Activated CD4-positive, alpha-beta memory T cell treated with anti-CD3 and anti-CD28 coated beads, Interleukin-2, amount 10 ng/mL, durations not matched to agents 7 days and 5 days (primary cell): ENCODE measurements at regions of chrX and their contacts with region 1.

Region 1: GRCh38 chrX:39859991-39860861 is 237.5 kb downstream of the BCOR start:
- DNase-seq: peak; percentile 89
- H3K4me3 Mint-ChIP-seq: peak overlapping the region; percentile 35
- H3K27ac Mint-ChIP-seq: peak overlapping the region; percentile 91
- H3K4me1 Mint-ChIP-seq: peaks cover 60% of the 10 kb centered on the region
- H3K27me3 Mint-ChIP-seq: no peaks in the 10 kb centered on the region

Region 2: DNA sequence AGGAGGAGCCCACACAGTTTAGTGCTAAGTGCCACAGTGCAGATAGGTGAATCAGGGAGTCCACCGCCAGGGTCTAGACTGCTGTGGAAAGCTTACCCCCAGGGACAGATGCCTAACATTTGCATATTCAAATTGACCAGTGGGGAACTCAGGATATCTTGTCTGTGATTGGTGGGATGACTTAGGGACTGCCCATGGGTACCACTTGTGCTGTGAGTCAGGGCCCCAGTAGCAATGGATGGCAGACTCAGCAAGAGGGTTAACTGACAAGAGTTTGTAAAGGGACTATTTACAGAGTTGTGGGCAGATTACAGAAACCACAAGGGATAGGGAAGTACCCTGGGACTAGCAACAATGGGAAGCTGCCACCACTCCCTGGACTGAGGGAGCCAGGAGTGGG is 44.6 kb before region 1 on chrX:
- CTCF ChIA-PET with region 1: interaction called, 14 read pairs
- POLR2A ChIA-PET with region 1: interaction called, 30 read pairs
- DNase-seq: no peak
- H3K4me3 Mint-ChIP-seq: no peak overlapping the region
- H3K27ac Mint-ChIP-seq: no peak overlapping the region
- H3K4me1 Mint-ChIP-seq: peaks cover 30% of the 10 kb centered on the region
- H3K27me3 Mint-ChIP-seq: peaks cover 10% of the 10 kb centered on the region

Region 3: DNA sequence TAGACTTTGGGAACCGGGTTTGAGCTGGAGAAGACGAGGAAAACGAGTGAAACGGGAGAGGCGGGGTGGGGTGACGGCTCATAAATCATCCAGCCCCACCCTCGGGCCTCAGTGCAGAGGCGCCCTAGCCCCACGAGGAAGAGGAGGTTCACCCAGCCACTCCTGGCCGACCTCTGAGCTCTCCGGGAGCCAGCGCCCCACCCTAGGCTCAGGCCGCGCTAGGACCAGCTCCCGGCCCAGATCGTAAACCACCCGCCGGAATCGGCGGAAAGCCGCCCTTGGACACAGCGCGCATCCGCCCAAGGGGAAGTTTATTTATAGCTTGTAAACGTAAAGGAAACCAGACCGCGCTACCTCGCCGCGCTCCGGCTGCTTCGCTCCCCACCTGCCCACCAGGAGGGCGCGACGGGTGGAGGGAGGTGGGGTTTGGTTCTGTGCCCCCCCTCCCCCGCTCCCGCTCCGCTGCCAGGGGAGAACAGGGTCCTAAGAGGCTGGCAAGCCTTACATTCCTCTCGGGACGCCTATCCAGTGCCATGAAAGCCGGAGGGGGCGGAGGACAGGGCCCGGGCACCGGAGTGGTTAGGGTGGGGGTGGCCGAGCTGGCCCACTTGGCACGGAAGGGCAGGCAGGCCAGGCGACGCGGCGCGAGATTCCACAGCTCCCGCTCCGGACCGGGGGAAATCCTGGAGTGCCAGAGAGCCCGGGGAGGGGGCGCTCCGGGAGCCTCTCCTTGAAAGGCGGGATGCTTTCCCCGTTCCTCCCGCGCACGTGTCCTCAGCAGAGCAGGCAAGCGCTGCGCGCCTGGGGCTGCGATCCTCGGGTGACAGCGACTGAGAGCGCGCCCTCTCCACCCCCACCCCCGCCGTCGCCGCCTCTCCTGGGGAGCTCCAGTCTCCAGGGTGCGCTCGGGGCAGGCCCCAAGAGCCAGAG is 153.3 kb after region 1 on chrX:
- CTCF ChIA-PET with region 1: interaction called, 3 read pairs
- POLR2A ChIA-PET with region 1: interaction called, 36 read pairs
- DNase-seq: peak; percentile 60
- H3K4me3 Mint-ChIP-seq: peak overlapping the region; percentile 73
- H3K27ac Mint-ChIP-seq: peak overlapping the region; percentile 64
- H3K4me1 Mint-ChIP-seq: peaks cover 31% of the 10 kb centered on the region
- H3K27me3 Mint-ChIP-seq: peaks cover 24% of the 10 kb centered on the region

Region 4: DNA sequence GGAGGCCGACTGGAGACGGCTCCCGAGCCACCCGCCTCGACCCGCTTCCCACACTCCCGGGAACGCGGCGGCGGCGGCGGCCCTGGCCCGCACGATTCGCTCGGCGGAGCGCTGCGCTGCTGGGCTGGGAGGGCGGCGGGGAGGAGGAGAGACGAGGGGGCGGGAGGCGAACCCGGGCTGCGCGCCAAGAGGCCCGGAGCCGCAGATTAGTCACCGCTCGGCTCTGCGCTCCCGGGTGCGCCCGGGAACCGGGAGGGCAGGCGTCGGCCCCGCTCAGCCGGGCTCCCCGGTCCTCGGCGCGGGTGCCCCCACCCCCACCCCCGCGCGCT is 248.7 kb after region 1 on chrX:
- CTCF ChIA-PET with region 1: no interaction called
- POLR2A ChIA-PET with region 1: interaction called, 12 read pairs
- DNase-seq: peak; percentile 66
- H3K4me3 Mint-ChIP-seq: peak overlapping the region; percentile 51
- H3K27ac Mint-ChIP-seq: no peak overlapping the region
- H3K4me1 Mint-ChIP-seq: peaks cover 18% of the 10 kb centered on the region
- H3K27me3 Mint-ChIP-seq: peaks cover 3% of the 10 kb centered on the region

Region 5: DNA sequence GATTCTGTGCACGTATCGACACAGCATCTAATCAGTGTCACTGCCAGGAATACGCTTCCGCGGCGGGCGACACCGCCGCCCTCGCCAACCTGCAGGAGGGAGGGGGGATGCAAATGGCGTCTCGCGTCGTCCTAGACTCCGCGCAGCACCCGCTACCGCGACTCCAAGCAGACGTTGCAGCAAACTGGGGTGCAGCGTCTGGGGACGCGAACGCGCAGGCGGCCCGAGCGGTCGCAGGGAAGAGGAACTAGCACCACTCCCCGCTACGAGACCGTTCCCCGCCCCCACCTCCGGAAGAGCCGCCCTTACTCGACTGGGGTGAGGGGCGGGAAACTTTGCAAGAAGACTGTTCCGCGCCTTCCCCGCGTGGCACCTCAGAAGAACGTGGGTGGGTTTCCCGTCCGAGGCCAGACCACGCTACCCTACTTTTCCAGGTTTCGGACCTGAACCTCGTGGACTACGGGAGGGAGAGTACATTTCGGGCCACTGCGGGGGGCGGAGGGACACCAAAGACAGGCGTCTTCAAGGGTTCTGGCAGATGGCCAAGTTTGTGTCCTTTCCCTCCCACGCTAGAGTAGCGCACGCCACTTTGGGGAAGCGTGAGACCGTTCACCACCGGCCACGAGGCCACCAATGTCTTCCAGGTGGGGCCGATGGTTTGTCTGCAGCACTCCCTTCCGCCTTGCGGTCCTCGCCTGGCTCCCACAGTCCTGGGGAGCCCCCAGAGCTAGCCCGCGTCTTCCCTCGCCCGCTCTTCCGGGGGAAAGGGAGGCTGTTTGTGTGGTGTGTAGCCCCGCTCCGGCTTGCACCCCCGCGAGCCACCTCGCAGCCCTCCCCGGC is 315.5 kb after region 1 on chrX:
- CTCF ChIA-PET with region 1: interaction called, 4 read pairs
- POLR2A ChIA-PET with region 1: interaction called, 25 read pairs
- DNase-seq: peak; percentile 81
- H3K4me3 Mint-ChIP-seq: peak overlapping the region; percentile 83
- H3K27ac Mint-ChIP-seq: peak overlapping the region; percentile 97
- H3K4me1 Mint-ChIP-seq: peaks cover 33% of the 10 kb centered on the region
- H3K27me3 Mint-ChIP-seq: no peaks in the 10 kb centered on the region